ENCODE measurements at regions of chr17 and their contacts with region 1.

Region 1: GRCh38 chr17:43393944-43394482 is 4.8 kb upstream of the ARL4D start:
- DNase-seq: peak; percentile 78 to 93 (median 88)
- ATAC-seq: peak; percentile 28
- H3K4me3 ChIP-seq: no peak overlapping the region
- H3K4me3 Mint-ChIP-seq: no peak overlapping the region
- H3K27ac ChIP-seq: no peak overlapping the region
- H3K27ac Mint-ChIP-seq: peak overlapping the region; percentile 11
- H3K4me1 ChIP-seq: peaks cover 21% of the 10 kb centered on the region
- H3K4me1 Mint-ChIP-seq: peaks cover 24% of the 10 kb centered on the region
- H3K27me3 ChIP-seq: no peaks in the 10 kb centered on the region
- H3K27me3 Mint-ChIP-seq: no peaks in the 10 kb centered on the region
- CTCF ChIP-seq: peak; percentile 88

Region 2: DNA sequence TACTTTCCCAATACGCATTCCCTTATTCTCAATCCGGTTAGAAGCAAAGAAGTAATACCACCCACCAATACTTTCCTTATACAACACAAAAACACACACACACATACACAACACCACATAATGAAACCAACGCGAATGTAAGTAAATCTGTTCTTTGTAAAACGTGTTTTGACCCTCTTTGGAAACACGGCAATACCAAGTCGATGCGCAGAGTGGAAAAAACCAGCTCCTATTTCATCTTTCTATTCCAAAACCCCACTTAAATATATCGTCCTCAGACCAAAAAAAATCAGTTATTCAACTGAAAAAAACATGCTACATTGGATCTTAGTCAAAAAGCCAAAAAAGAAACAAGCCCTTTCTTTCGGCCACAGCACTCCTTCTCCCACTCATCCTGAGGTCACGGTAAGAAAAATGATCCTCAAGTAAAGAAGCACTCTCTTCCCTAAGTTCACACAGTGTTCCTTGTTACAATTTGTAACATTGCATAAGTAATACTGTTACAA is 26.2 kb before region 1 on chr17:
- CTCF ChIA-PET with region 1: interaction called, 15 read pairs
- POLR2A ChIA-PET with region 1: interaction called, 208 read pairs
- intact Hi-C with region 1: loop called (anchors 1 kb)
- DNase-seq: peak in 5 of 9 experiments; percentile 16 to 86 (median 24)
- ATAC-seq: peak; percentile 57
- H3K4me3 ChIP-seq: peak overlapping the region; percentile 73 to 76
- H3K4me3 Mint-ChIP-seq: peak overlapping the region; percentile 97
- H3K27ac ChIP-seq: peak overlapping the region; percentile 97 to 98
- H3K27ac Mint-ChIP-seq: peak overlapping the region; percentile 100
- H3K4me1 ChIP-seq: peaks cover 20% of the 10 kb centered on the region
- H3K4me1 Mint-ChIP-seq: peaks cover 38% of the 10 kb centered on the region
- H3K27me3 ChIP-seq: no peaks in the 10 kb centered on the region
- H3K27me3 Mint-ChIP-seq: no peaks in the 10 kb centered on the region
- CTCF ChIP-seq: no peak

Region 3: GRCh38 chr17:43377056-43377810 is 16.8 kb before region 1 on chr17:
- CTCF ChIA-PET with region 1: interaction called, 11 read pairs
- POLR2A ChIA-PET with region 1: no interaction called
- intact Hi-C with region 1: no loop called
- DNase-seq: no peak
- ATAC-seq: no peak
- H3K4me3 ChIP-seq: no peak overlapping the region
- H3K4me3 Mint-ChIP-seq: no peak overlapping the region
- H3K27ac ChIP-seq: no peak overlapping the region
- H3K27ac Mint-ChIP-seq: no peak overlapping the region
- H3K4me1 ChIP-seq: no peaks in the 10 kb centered on the region
- H3K4me1 Mint-ChIP-seq: peaks cover 1% of the 10 kb centered on the region
- H3K27me3 ChIP-seq: no peaks in the 10 kb centered on the region
- H3K27me3 Mint-ChIP-seq: no peaks in the 10 kb centered on the region
- CTCF ChIP-seq: no peak

Region 4: GRCh38 chr17:43428524-43428923 is 34.5 kb after region 1 on chr17:
- CTCF ChIA-PET with region 1: interaction called, 7 read pairs
- POLR2A ChIA-PET with region 1: no interaction called
- intact Hi-C with region 1: loop called (anchors 1 kb)
- DNase-seq: no peak
- ATAC-seq: no peak
- H3K4me3 ChIP-seq: no peak overlapping the region
- H3K4me3 Mint-ChIP-seq: no peak overlapping the region
- H3K27ac ChIP-seq: no peak overlapping the region
- H3K27ac Mint-ChIP-seq: no peak overlapping the region
- H3K4me1 ChIP-seq: no peaks in the 10 kb centered on the region
- H3K4me1 Mint-ChIP-seq: no peaks in the 10 kb centered on the region
- H3K27me3 ChIP-seq: peaks cover 0 to 4% of the 10 kb centered on the region in 2 experiments
- H3K27me3 Mint-ChIP-seq: peaks cover 20% of the 10 kb centered on the region
- CTCF ChIP-seq: no peak

Region 5: DNA sequence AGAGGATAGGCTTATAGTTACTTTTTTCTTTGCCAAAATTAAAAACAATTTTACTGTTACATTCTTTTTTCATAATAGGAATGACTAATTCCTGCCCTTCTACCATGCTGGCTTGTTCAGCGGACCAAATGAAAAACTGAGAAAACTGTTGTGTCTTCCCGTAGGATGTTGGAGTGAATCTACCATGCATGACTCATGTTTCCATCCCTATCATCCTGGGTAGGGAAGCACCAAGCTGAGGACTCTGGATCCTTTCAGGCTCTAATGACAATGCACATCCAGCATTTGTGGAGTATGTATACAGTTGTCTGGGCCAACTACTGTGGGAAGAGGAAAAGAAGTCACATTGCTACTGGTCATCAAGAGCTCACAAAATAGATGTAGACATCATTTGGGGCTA is 48.7 kb after region 1 on chr17:
- CTCF ChIA-PET with region 1: no interaction called
- POLR2A ChIA-PET with region 1: no interaction called
- intact Hi-C with region 1: no loop called
- DNase-seq: no peak
- ATAC-seq: no peak
- H3K4me3 ChIP-seq: no peak overlapping the region
- H3K4me3 Mint-ChIP-seq: no peak overlapping the region
- H3K27ac ChIP-seq: no peak overlapping the region
- H3K27ac Mint-ChIP-seq: no peak overlapping the region
- H3K4me1 ChIP-seq: no peaks in the 10 kb centered on the region
- H3K4me1 Mint-ChIP-seq: no peaks in the 10 kb centered on the region
- H3K27me3 ChIP-seq: peaks cover 0 to under 1% of the 10 kb centered on the region in 2 experiments
- H3K27me3 Mint-ChIP-seq: peaks cover 6% of the 10 kb centered on the region
- CTCF ChIP-seq: no peak

Region 6: GRCh38 chr17:43477832-43478634 is 84.0 kb after region 1 on chr17:
- CTCF ChIA-PET with region 1: interaction called, 156 read pairs
- POLR2A ChIA-PET with region 1: interaction called, 37 read pairs
- intact Hi-C with region 1: loop called (anchors 1 kb)
- DNase-seq: no peak
- ATAC-seq: no peak
- H3K4me3 ChIP-seq: no peak overlapping the region
- H3K4me3 Mint-ChIP-seq: no peak overlapping the region
- H3K27ac ChIP-seq: no peak overlapping the region
- H3K27ac Mint-ChIP-seq: no peak overlapping the region
- H3K4me1 ChIP-seq: peaks cover under 1% of the 10 kb centered on the region
- H3K4me1 Mint-ChIP-seq: no peaks in the 10 kb centered on the region
- H3K27me3 ChIP-seq: no peaks in the 10 kb centered on the region
- H3K27me3 Mint-ChIP-seq: peaks cover 3% of the 10 kb centered on the region
- CTCF ChIP-seq: no peak

Region 7: DNA sequence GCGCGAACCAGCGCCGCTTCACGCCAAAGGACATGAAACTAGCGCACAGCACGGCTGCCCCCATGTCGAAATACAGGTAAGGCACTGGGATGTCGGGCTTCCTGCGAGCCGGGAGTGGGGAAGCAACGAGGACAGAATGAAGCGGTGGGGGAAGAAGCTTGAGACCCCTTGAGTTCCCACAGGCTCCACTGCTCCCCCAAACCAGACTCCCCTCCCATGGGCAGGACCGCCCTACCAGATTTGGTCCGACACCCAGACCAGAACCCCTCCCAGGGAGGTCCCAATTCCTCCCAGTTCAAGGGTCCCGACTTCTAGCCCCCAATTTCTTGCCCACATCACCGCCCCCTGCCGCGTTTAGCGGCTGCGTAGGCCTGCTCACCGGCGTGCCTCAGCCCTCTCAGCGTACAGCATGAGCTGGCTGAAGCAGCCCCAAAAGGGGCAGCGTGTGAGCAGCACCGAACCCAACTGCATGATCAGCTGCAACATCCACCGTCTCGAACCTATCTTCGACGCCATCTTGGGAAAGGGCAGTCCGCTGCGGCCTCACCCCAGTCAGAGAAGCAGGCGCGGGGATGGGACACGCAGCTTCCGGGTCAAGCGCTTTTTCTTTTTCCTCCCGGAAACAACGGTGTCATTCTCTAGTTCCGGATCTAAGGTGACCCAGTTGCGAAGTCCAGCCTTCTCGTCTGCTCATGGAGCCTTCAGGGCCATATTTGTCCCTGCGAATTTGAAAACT is 620.6 kb after region 1 on chr17 and contains the start of gene TMEM101:
- CTCF ChIA-PET with region 1: no interaction called
- POLR2A ChIA-PET with region 1: no interaction called
- intact Hi-C with region 1: loop called (anchors 10 kb)
- DNase-seq: peak; percentile 79 to 95 (median 90)
- ATAC-seq: peak; percentile 99
- H3K4me3 ChIP-seq: peak within 1 kb of the TSS; percentile 81 to 91
- H3K4me3 Mint-ChIP-seq: peak within 1 kb of the TSS; percentile 100
- H3K27ac ChIP-seq: peak within 1 kb of the TSS; percentile 51 to 55
- H3K27ac Mint-ChIP-seq: peak within 1 kb of the TSS; percentile 95
- H3K4me1 ChIP-seq: peaks cover 11% of the 10 kb centered on the region
- H3K4me1 Mint-ChIP-seq: peaks cover 10% of the 10 kb centered on the region
- H3K27me3 ChIP-seq: no peaks in the 10 kb centered on the region
- H3K27me3 Mint-ChIP-seq: no peaks in the 10 kb centered on the region
- CTCF ChIP-seq: no peak
- total RNA-seq, gene TMEM101: 8.1 to 8.7 TPM

Region 8: GRCh38 chr17:44385287-44386181 is 991.5 kb after region 1 on chr17:
- CTCF ChIA-PET with region 1: no interaction called
- POLR2A ChIA-PET with region 1: no interaction called
- intact Hi-C with region 1: loop called in 1 of 2 experiments (anchors 5 kb)
- DNase-seq: peak; percentile 65 to 89 (median 80)
- ATAC-seq: peak; percentile 96
- H3K4me3 ChIP-seq: peak overlapping the region; percentile 60 to 62
- H3K4me3 Mint-ChIP-seq: peak overlapping the region; percentile 75
- H3K27ac ChIP-seq: no peak overlapping the region
- H3K27ac Mint-ChIP-seq: no peak overlapping the region
- H3K4me1 ChIP-seq: peaks cover 18% of the 10 kb centered on the region
- H3K4me1 Mint-ChIP-seq: peaks cover 22% of the 10 kb centered on the region
- H3K27me3 ChIP-seq: peaks cover 3 to 8% of the 10 kb centered on the region in 2 experiments
- H3K27me3 Mint-ChIP-seq: peaks cover 31% of the 10 kb centered on the region
- CTCF ChIP-seq: no peak